Activated CD4-positive, alpha-beta T cell treated with anti-CD3 and anti-CD28 coated beads for 36 hours (primary cell): ENCODE measurements at regions of chr13 and their contacts with region 1.

Region 1: GRCh38 chr13:78137404-78138142 is 218.9 kb upstream of the EDNRB start:
- DNase-seq: peak; percentile 8
- ATAC-seq: peak; percentile 88
- H3K4me3 Mint-ChIP-seq: no peak overlapping the region
- H3K27ac Mint-ChIP-seq: no peak overlapping the region
- H3K4me1 Mint-ChIP-seq: peaks cover 3% of the 10 kb centered on the region
- H3K27me3 Mint-ChIP-seq: no peaks in the 10 kb centered on the region

Region 2: GRCh38 chr13:76440568-76440967 is 1697.0 kb before region 1 on chr13:
- CTCF ChIA-PET with region 1: no interaction called
- POLR2A ChIA-PET with region 1: no interaction called
- intact Hi-C with region 1: no loop called
- DNase-seq: no peak
- ATAC-seq: no peak
- H3K4me3 Mint-ChIP-seq: no peak overlapping the region
- H3K27ac Mint-ChIP-seq: no peak overlapping the region
- H3K4me1 Mint-ChIP-seq: no peaks in the 10 kb centered on the region
- H3K27me3 Mint-ChIP-seq: peaks cover 2% of the 10 kb centered on the region

Region 3: DNA sequence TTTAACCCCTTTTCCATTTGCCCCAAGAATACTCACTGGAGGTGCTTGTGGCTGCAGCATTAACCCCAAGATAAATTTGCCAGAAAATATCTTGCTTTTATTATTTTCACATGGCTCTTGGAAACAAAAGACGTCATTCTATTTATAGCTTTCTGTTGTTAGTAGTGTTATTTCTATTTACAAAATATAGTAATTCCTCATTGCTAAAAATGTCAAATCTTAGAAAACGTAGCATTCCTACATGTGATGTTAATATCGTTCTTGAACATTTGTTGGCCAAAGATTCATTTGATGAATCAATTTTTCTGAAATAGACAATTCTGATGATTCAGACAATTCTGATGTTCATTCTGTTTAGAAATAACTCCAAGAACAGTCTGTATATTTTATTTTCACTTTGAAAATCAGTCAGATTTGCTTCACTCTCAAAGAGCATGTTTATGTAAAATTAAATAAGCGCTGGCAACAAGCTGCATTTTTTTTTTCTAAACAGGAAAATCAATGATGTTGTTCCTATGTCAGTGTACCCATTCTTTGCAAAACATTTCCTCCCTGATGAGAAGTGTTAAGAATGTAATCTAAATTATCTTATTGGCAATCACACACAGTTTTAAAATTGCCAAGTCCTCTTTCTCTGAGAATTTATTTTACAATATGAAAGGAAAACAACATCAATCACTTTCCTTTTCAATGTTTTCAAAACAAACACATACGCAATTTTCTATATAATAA is 1585.4 kb before region 1 on chr13:
- CTCF ChIA-PET with region 1: no interaction called
- POLR2A ChIA-PET with region 1: no interaction called
- intact Hi-C with region 1: no loop called
- DNase-seq: no peak
- ATAC-seq: no peak
- H3K4me3 Mint-ChIP-seq: no peak overlapping the region
- H3K27ac Mint-ChIP-seq: no peak overlapping the region
- H3K4me1 Mint-ChIP-seq: no peaks in the 10 kb centered on the region
- H3K27me3 Mint-ChIP-seq: no peaks in the 10 kb centered on the region

Region 4: GRCh38 chr13:78147905-78148304 is 10.3 kb after region 1 on chr13:
- CTCF ChIA-PET with region 1: interaction called, 10 read pairs
- POLR2A ChIA-PET with region 1: no interaction called
- intact Hi-C with region 1: no loop called
- DNase-seq: no peak
- ATAC-seq: no peak
- H3K4me3 Mint-ChIP-seq: no peak overlapping the region
- H3K27ac Mint-ChIP-seq: no peak overlapping the region
- H3K4me1 Mint-ChIP-seq: no peaks in the 10 kb centered on the region
- H3K27me3 Mint-ChIP-seq: peaks cover 2% of the 10 kb centered on the region

Region 5: DNA sequence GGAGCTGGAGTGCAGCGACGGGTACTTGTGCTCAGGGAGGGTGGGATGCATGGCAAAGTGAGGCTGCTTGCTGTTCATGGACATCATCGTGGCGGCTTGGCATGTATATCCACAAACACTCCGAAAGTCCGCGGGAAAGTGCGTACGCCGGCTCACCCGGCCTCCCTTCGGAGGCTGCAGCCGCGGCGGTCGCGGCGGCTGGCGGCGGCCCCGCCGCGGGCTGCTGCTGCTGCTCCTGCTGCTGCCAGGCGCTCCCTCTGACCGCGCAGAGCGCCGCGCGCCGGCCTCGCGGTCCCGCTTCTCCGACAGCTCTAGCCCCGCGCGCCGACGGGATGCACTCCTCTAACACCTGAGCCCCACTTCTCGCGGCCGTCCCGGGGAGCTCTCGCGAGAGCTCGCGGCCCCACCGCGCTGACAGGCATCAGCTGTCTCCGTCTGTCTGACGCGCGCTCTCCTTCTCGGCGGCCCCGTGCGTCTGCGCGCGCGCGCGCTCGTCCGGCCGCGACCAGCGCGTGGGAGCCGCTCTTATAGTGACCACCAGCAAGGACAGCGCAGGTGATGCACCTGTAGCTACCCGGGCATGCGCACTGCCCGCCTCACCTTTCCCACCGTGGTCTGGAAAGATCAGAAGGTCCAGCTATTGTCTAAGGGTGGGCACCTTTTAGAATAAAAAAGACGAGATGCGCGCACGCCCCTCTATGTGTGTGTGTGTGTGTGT is 465.8 kb after region 1 on chr13 and contains the start of gene POU4F1:
- CTCF ChIA-PET with region 1: no interaction called
- POLR2A ChIA-PET with region 1: no interaction called
- intact Hi-C with region 1: loop called in 1 of 2 experiments (anchors 5 kb)
- DNase-seq: peak; percentile 90
- ATAC-seq: peak; percentile 89
- H3K4me3 Mint-ChIP-seq: peak within 1 kb of the TSS; percentile 67
- H3K27ac Mint-ChIP-seq: no peak within 1 kb of the TSS
- H3K4me1 Mint-ChIP-seq: peaks cover 44% of the 10 kb centered on the region
- H3K27me3 Mint-ChIP-seq: peaks cover 83% of the 10 kb centered on the region
- total RNA-seq, gene POU4F1: 0.21 to 0.26 TPM

Region 6: DNA sequence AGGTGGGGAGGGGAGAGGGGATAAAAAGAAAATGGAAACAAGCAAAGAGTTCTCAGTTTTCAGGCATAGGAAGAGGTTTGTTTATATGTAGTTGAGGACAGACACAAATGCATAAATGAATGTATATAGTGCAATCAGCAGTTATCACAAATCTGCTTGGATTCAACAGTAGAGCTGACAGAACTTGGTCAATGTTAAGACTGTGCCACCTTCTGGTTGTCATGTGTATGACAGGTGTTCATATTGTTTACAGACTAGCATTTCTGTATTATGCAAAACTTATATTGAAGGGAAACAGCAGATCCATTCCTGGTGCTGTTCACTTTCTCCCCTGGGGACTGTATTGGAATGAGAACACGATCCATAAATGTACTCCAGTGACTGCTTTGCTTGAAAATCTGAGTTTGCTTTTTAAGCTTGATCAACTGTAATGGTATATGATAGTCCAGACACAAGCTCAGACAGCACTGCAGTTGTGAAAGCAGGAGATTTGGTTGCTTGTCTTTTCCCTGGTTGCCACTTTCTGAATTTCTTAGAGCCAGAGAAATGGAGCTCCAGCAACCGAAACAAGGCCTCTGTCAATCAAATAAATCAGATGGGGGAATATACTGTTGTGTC is 840.9 kb after region 1 on chr13:
- CTCF ChIA-PET with region 1: interaction called, 38 read pairs
- POLR2A ChIA-PET with region 1: no interaction called
- intact Hi-C with region 1: loop called (anchors 1 kb)
- DNase-seq: peak; percentile 55
- ATAC-seq: peak; percentile 71
- H3K4me3 Mint-ChIP-seq: no peak overlapping the region
- H3K27ac Mint-ChIP-seq: no peak overlapping the region
- H3K4me1 Mint-ChIP-seq: no peaks in the 10 kb centered on the region
- H3K27me3 Mint-ChIP-seq: peaks cover 8% of the 10 kb centered on the region

Region 7: GRCh38 chr13:79541426-79542049 is 1404.0 kb after region 1 on chr13:
- CTCF ChIA-PET with region 1: no interaction called
- POLR2A ChIA-PET with region 1: no interaction called
- intact Hi-C with region 1: loop called in 1 of 2 experiments (anchors 5 kb)
- DNase-seq: no peak
- ATAC-seq: no peak
- H3K4me3 Mint-ChIP-seq: no peak overlapping the region
- H3K27ac Mint-ChIP-seq: no peak overlapping the region
- H3K4me1 Mint-ChIP-seq: peaks cover 9% of the 10 kb centered on the region
- H3K27me3 Mint-ChIP-seq: no peaks in the 10 kb centered on the region